ENCODE measurements at regions of chr11 and their contacts with region 1.

Region 1: DNA sequence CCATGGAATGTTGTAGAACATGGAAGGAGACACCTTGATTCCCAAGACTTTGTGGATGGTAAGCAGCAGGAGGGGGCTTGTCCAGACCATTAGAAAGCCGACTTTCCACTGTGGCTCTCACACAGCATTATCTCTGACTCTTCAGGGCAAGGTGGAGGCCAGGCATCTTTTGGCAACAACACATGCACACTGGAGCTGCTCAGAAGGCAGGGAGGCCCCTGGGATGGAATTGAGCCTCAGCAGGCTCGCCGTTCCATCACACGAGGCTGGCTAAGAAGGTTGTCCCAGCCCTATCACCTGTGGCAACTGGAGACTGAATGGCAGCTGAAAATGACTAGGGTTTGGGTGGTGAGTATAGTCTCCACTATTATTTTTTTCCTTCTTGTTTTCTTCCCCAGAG is 76.3 kb upstream of the TMEM45B start:
- DNase-seq: no peak

Region 2: GRCh38 chr11:127804747-127805400 is 1934.5 kb before region 1 on chr11:
- intact Hi-C with region 1: no loop called
- DNase-seq: no peak

Region 3: DNA sequence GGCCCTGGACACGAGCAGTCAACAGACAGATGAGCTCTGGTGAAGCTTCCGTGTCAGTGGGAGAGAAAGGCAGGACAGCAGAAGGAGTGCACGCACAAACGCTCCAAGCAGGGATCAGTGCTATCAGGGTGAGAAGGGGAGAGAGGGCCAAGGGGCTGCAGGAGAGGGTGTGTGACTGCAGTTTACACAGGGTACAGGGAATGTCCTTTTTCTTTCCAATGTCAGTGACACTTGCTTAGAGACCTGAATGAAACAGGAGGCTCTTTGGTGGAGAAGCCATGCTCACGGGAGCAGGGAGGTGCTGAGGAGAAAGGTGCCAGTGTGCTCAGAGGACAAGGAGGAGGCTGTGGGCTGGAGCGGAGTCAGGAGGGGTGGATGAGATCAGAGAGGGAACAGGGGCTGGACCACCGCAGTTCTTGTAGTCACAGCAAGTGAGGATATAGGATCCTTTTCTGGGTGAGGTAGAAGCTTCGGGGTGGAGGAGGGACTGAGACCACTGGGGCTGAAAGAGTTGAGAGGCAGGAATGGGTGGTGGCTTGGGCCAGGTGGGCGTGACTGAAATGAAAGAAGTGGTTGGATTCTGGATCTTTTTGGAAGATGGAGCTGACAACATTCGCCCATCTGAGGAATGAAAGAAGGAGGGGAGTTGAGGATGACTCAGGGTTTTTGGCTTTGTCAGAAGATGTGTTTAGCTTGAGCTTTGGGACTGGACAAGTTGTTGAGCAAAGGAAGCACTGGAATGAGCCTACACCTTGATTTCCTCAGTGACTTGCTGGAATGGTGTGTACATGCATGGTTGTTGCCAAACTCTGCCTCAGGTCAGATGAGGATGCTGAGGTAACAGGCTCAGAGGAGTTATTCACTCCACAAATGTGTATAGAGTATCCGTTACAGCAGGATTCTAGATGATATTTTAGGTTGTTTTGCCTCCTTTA is 797.0 kb after region 1 on chr11:
- intact Hi-C with region 1: loop called in 1 of 2 experiments (anchors 5 kb)
- DNase-seq: peak; percentile 65

Measured in posterior vena cava (tissue), 2 donors.